CD8-positive, alpha-beta T cell (primary cell): ENCODE measurements at regions of chr2 and their contacts with region 1.

Region 1: GRCh38 chr2:208033758-208034502 is 8.6 kb upstream of the PLEKHM3 start:
- DNase-seq: peak in 7 of 9 experiments; percentile 4 to 64 (median 48)
- ATAC-seq: peak; percentile 44
- H3K4me3 ChIP-seq: no peak overlapping the region
- H3K4me3 Mint-ChIP-seq: no peak overlapping the region
- H3K27ac ChIP-seq: no peak overlapping the region
- H3K27ac Mint-ChIP-seq: no peak overlapping the region
- H3K4me1 ChIP-seq: no peaks in the 10 kb centered on the region
- H3K4me1 Mint-ChIP-seq: no peaks in the 10 kb centered on the region
- H3K27me3 ChIP-seq: no peaks in the 10 kb centered on the region
- H3K27me3 Mint-ChIP-seq: no peaks in the 10 kb centered on the region
- CTCF ChIP-seq: peak; percentile 41

Region 2: DNA sequence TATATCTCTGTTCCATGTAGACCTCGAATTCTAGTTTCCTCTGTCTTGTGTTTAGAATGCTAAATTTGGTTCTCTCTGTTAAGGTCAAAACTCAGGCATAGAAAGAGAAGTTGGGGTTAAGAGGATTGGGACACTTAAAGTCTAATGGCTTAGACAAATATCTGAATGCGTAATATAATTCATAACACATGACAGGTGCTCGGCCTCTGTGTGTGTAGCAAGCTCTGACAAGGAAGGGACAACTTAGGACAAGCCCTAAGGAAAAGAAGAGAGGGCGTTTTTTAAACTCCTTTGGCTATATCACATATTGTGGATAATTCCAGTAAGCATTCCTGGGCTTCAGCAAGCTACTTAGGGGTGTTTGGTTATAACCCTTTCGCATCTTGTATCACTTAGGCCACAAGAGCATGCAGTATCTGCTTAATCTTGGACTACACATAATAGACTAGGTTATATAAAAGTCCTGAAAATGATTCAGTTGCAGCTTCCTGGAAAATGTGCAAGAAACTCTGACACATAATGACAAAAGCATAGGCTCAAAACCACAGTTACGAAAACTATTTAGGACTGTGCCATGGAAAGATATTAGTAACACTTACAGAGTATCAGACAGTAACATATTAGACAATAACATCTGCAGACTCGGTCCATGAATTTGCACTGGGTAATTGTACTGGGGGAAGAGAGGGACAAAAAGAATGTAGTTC is 520.2 kb before region 1 on chr2:
- CTCF ChIA-PET with region 1: no interaction called
- POLR2A ChIA-PET with region 1: no interaction called
- intact Hi-C with region 1: loop called in 1 of 2 experiments (anchors 10 kb)
- DNase-seq: no peak
- ATAC-seq: no peak
- H3K4me3 ChIP-seq: no peak overlapping the region
- H3K4me3 Mint-ChIP-seq: no peak overlapping the region
- H3K27ac ChIP-seq: no peak overlapping the region
- H3K27ac Mint-ChIP-seq: no peak overlapping the region
- H3K4me1 ChIP-seq: no peaks in the 10 kb centered on the region
- H3K4me1 Mint-ChIP-seq: peaks cover 4% of the 10 kb centered on the region
- H3K27me3 ChIP-seq: no peaks in the 10 kb centered on the region
- H3K27me3 Mint-ChIP-seq: no peaks in the 10 kb centered on the region
- CTCF ChIP-seq: no peak